B cell (primary cell): ENCODE measurements at regions of chr9 and their contacts with region 1.

Region 1: DNA sequence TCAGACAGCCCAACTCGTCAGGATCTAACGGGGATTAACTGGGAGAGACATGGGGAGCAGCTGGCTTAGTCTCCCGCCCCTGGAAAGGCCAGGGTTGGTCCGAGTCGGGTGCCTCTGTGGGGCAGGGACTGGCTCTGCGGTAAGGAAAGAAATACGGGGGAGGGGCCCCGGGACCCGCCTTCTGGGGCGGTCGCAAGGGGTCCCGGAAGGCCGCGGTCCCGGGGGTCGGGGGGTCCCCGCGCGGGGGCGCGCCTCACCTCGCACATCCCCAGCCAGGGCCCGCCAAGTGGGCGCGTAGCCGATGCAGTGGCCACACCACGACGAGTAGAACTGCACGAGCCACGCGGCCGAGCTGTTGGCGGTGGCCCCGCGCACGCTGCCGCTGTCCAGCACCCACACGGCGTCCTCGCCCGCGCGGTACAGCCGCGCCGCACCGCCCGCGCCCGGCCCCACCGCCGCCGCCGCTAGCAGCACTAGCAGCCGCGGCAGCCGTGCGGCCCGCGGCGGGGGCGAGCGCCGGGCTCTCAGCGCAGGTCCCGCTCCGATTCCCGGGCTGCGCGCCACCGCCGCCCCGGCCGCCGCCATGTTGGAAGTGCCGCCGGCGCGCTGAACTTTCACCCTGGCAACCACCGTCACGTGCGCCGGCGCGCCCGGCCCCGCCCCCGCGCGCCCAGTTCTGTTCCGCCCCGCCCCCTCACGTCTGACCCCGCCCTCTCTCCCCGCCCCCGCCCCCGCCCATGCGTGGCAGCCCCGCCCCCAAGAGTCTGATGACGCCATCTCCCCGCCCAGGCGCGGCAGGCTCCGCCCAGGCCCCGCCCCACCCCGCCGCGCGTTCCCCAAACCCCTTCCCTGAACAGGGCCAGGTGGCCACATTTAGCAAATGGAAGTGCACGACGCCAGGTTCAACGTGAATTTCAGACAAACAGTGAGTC is at the start of gene QSOX2:
- DNase-seq: peak; percentile 91
- ATAC-seq: peak; percentile 71
- H3K4me3 ChIP-seq: peak within 1 kb of the TSS; percentile 66 to 97 (median 90)
- H3K4me3 Mint-ChIP-seq: peak within 1 kb of the TSS; percentile 94
- H3K27ac ChIP-seq: peak within 1 kb of the TSS; percentile 70 to 83
- H3K27ac Mint-ChIP-seq: peak within 1 kb of the TSS; percentile 90
- H3K4me1 ChIP-seq: peaks cover 46 to 51% of the 10 kb centered on the region in 2 donors
- H3K4me1 Mint-ChIP-seq: peaks cover 50% of the 10 kb centered on the region
- H3K27me3 ChIP-seq: no peaks in the 10 kb centered on the region
- H3K27me3 Mint-ChIP-seq: no peaks in the 10 kb centered on the region
- CTCF ChIP-seq: no peak
- total RNA-seq, gene QSOX2: 139 and 141 TPM in 2 replicates

Region 2: GRCh38 chr9:134492281-134492691 is 1753.2 kb before region 1 on chr9:
- CTCF ChIA-PET with region 1: no interaction called
- POLR2A ChIA-PET with region 1: no interaction called
- intact Hi-C with region 1: no loop called
- DNase-seq: no peak
- ATAC-seq: no peak
- H3K4me3 ChIP-seq: no peak overlapping the region
- H3K4me3 Mint-ChIP-seq: no peak overlapping the region
- H3K27ac ChIP-seq: no peak overlapping the region
- H3K27ac Mint-ChIP-seq: no peak overlapping the region
- H3K4me1 ChIP-seq: peaks cover 8 to 11% of the 10 kb centered on the region in 2 donors
- H3K4me1 Mint-ChIP-seq: peaks cover 1% of the 10 kb centered on the region
- H3K27me3 ChIP-seq: peaks cover 0 to 7% (median 1%) of the 10 kb centered on the region in 4 experiments
- H3K27me3 Mint-ChIP-seq: peaks cover 18% of the 10 kb centered on the region
- CTCF ChIP-seq: no peak

Region 3: DNA sequence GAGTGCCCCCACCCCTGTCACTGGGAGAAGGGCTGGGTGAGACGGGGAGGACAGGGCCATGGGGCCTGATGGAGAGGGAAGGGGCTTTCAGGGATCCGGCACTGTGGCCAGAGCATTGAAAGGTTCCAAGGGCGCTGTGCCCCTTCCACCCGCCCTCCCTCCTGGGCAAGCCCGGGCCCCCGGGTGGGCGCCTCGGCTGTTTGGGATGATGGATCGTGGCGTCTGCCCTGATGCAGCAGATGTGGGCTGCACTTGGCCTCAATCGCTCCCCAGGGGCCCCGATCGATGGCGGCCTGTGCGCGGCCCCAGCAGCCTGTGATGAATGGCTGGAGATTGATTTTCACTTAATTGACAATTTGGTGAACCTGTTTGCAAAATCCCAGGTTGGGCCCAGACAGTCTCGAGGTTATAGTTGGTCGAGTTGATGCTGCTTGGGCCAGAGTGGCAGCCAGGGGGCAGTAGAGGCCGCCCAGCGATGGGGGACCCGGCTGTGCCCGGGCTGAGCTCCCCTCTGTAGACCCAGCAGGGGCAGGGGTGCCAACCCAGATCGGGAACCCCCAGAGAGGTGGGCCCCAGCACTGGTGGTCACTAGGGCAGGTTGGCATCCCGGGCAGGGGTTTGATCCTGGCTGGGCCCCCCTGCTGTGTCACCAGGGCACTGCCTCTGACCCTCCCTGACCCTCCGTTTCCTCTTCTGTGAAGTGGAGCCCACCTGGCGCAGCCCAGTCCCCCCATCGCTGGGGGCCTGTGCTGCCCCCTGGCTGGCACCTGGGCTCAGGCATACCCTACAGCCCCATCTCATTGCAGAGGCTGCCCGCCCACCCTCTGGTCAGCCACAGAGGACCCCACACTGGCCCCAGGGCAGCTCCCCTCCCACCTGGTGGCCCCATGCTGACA is 75.2 kb before region 1 on chr9:
- CTCF ChIA-PET with region 1: interaction called, 33 read pairs
- POLR2A ChIA-PET with region 1: interaction called, 4 read pairs
- intact Hi-C with region 1: loop called (anchors 1 kb)
- DNase-seq: peak; percentile 80
- ATAC-seq: peak; percentile 97
- H3K4me3 ChIP-seq: no peak overlapping the region
- H3K4me3 Mint-ChIP-seq: no peak overlapping the region
- H3K27ac ChIP-seq: no peak overlapping the region
- H3K27ac Mint-ChIP-seq: peak overlapping the region; percentile 68
- H3K4me1 ChIP-seq: peaks cover 0 to 15% of the 10 kb centered on the region in 2 donors
- H3K4me1 Mint-ChIP-seq: peaks cover 11% of the 10 kb centered on the region
- H3K27me3 ChIP-seq: peaks cover 0 to 35% (median 4%) of the 10 kb centered on the region in 4 experiments
- H3K27me3 Mint-ChIP-seq: peaks cover 21% of the 10 kb centered on the region
- CTCF ChIP-seq: peak; percentile 85

Region 4: DNA sequence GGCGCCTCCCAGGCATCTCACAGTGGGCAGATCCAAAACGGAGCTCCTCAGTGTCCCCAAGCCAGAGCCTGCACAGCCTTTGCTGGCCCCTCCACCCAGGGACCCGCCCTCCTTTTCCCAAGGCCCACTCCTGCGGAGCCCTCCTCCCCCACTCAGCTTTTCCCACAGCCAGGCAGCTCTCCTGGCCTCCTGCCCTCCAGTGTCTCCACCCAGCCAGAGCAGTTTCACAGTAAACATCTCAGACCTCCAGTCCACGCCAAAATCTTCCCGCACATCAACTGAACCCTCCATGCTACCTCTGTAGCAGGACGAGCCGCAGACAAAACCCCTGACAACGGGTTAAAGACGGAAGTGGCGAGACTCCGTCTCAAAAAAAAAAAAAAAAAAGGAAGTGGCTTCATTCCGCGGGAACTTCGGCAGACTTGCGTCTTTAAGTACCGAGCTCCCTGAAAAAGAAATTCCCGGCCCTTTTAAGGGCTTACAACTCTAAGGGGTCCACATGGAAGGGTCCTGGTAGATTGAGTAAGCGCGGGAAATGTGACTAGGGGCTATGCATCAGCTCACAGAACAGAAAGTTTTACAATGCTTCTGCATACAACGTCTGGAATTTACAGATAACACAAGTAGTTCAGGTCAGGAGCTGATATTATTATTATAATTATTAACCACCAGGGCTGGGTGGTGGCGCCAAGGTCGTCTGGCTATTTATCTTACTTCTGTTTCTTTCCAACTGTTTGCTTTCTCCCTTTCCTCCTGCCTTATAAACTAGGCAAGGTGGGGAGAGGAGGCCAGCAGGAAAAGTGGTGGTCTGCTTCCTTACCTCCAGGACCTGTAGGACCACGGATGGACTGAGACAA is 882.0 kb after region 1 on chr9:
- CTCF ChIA-PET with region 1: no interaction called
- POLR2A ChIA-PET with region 1: no interaction called
- intact Hi-C with region 1: no loop called
- DNase-seq: peak; percentile 84
- ATAC-seq: no peak
- H3K4me3 ChIP-seq: peak overlapping the region in 4 of 5 experiments; percentile 43 to 69 (median 50)
- H3K4me3 Mint-ChIP-seq: peak overlapping the region; percentile 89
- H3K27ac ChIP-seq: peak overlapping the region; percentile 71 to 93
- H3K27ac Mint-ChIP-seq: peak overlapping the region; percentile 95
- H3K4me1 ChIP-seq: peaks cover 45 to 49% of the 10 kb centered on the region in 2 donors
- H3K4me1 Mint-ChIP-seq: peaks cover 42% of the 10 kb centered on the region
- H3K27me3 ChIP-seq: no peaks in the 10 kb centered on the region
- H3K27me3 Mint-ChIP-seq: no peaks in the 10 kb centered on the region
- CTCF ChIP-seq: no peak